GM12878 (cell line): ENCODE measurements at regions of chr22 and their contacts with region 1.

Region 1: GRCh38 chr22:42614312-42615091 is at the start of gene POLDIP3:
- DNase-seq: peak; percentile 78
- ATAC-seq: peak; percentile 79
- H3K4me3 ChIP-seq: peak within 1 kb of the TSS; percentile 94
- H3K27ac ChIP-seq: peak within 1 kb of the TSS; percentile 100
- H3K4me1 ChIP-seq: peaks cover 17% of the 10 kb centered on the region
- H3K27me3 ChIP-seq: no peaks in the 10 kb centered on the region
- CTCF ChIP-seq: peak; percentile 5 to 38 (median 36); a peak in 4 of 6 replicates
- EP300 ChIP-seq: 0 out of 4 replicates have a peak, but pooled peaks of 1 of the 2 experiments have one; percentile 13
- POLR2A ChIP-seq: peak; percentile 78
- RAD21 ChIP-seq: no peak
- polyA plus RNA-seq, gene POLDIP3: 14.8 to 19.3 TPM

Region 2: DNA sequence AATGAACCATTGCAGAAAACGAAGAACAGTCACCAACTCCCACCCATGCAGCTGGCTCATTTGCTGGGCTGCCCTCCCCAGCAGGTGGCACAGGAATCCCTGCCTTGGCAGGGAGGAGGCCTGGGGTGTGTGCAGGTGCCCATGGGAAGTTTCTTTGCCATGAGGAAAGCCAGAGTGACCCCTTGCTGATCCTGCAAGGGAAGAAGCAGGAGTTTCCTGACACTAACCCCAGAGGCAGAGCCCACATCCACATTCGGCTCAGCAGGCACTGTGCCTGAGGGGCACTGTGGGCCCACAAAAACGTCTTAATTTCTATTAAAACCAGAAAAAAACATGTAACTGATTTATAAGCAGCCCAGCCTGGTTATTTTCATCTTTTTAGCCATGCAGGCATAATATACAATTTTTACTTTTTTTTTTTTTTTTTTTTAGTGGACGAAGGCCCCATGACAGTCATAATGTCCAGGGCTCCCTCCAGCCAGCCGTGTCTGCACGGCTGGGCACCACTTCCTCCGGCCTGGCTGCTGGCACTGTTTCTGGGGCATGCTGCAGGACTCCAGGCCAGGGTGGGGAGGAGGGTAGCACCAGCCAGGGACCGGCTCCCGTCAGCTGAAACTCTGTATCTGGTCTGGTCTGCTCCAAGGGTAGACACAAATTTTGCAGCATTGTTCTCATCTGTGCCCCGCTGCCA is 86.1 kb before region 1 on chr22:
- CTCF ChIA-PET with region 1: interaction called, 4 read pairs
- POLR2A ChIA-PET with region 1: no interaction called
- RAD21 ChIA-PET with region 1: no interaction called
- SMC1A ChIA-PET with region 1: no interaction called
- in situ Hi-C with region 1: no loop called
- intact Hi-C with region 1: loop called (anchors 5 kb)
- DNase-seq: no peak
- ATAC-seq: no peak
- H3K4me3 ChIP-seq: no peak overlapping the region
- H3K27ac ChIP-seq: no peak overlapping the region
- H3K4me1 ChIP-seq: peaks cover 12% of the 10 kb centered on the region
- H3K27me3 ChIP-seq: no peaks in the 10 kb centered on the region
- CTCF ChIP-seq: no peak
- EP300 ChIP-seq: no peak
- POLR2A ChIP-seq: no peak
- RAD21 ChIP-seq: no peak

Region 3: GRCh38 chr22:42649246-42650099 is 35.0 kb after region 1 on chr22 and contains the start of gene CYB5R3:
- CTCF ChIA-PET with region 1: no interaction called
- POLR2A ChIA-PET with region 1: interaction called, 5 read pairs
- RAD21 ChIA-PET with region 1: interaction called, 4 read pairs
- SMC1A ChIA-PET with region 1: no interaction called
- in situ Hi-C with region 1: no loop called
- intact Hi-C with region 1: loop called (anchors 2 kb)
- DNase-seq: no peak
- ATAC-seq: peak; percentile 79
- H3K4me3 ChIP-seq: peak within 1 kb of the TSS; percentile 100
- H3K27ac ChIP-seq: peak within 1 kb of the TSS; percentile 85
- H3K4me1 ChIP-seq: peaks cover 25% of the 10 kb centered on the region
- H3K27me3 ChIP-seq: no peaks in the 10 kb centered on the region
- CTCF ChIP-seq: no peak
- EP300 ChIP-seq: no peak
- POLR2A ChIP-seq: peak; percentile 82
- RAD21 ChIP-seq: no peak
- polyA plus RNA-seq, gene CYB5R3: 2.0 to 3.5 TPM

Region 4: DNA sequence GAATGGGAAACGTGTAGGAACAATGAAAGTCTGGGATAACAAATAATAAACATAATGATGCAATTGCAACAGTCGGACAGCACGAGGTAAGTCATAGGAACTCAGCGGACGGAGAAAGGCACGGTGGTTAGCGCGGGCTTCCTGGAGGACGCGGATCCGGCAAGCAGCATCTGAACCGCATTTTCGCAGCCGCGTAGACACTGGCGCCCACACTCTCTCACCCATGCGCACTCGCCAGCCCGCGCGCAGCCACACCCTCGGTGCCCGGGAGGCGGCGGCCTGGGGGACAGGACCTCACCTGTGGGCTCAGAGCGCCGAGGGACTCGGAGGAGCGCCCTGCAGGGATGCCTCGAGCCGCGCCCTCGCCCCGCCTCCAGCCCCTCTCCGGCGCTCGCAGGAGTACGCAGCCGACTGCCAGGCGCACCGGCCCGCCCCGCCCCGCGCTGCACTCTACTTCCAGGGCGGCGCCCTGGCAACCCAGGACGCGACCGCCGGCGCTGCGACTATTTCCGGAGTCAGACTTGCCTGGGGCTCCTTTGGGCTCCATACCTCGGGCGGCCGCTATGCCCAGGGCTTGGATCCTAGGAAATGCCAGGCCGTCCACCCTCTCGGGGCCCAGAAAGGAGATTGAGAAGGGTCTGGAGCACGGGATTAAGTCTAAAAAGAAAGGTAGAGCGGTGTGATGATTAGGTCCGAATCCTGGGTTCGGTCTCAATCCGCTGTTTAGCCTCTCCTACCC is 474.6 kb after region 1 on chr22 and contains the start of gene TTLL1:
- CTCF ChIA-PET with region 1: no interaction called
- POLR2A ChIA-PET with region 1: no interaction called
- RAD21 ChIA-PET with region 1: no interaction called
- SMC1A ChIA-PET with region 1: interaction called, 3 read pairs
- in situ Hi-C with region 1: no loop called
- intact Hi-C with region 1: loop called (anchors 5 kb)
- DNase-seq: peak; percentile 27
- ATAC-seq: peak; percentile 96
- H3K4me3 ChIP-seq: peak within 1 kb of the TSS; percentile 74
- H3K27ac ChIP-seq: peak within 1 kb of the TSS; percentile 27; the same call in 1 of the 2 replicates
- H3K4me1 ChIP-seq: peaks cover 15% of the 10 kb centered on the region
- H3K27me3 ChIP-seq: no peaks in the 10 kb centered on the region
- CTCF ChIP-seq: no peak
- EP300 ChIP-seq: no peak
- POLR2A ChIP-seq: peak; percentile 84
- RAD21 ChIP-seq: no peak
- polyA plus RNA-seq, gene TTLL1: 0.39 to 0.80 TPM